Naive thymus-derived CD4-positive, alpha-beta T cell (primary cell): ENCODE measurements at regions of chr13 and their contacts with region 1.

Region 1: GRCh38 chr13:24727731-24728601 is 36.0 kb upstream of the RNF17 start:
- DNase-seq: peak in 8 of 9 donors; percentile 55 to 82 (median 73)
- ATAC-seq: peak; percentile 99
- H3K4me3 ChIP-seq: no peak overlapping the region
- H3K4me3 Mint-ChIP-seq: no peak overlapping the region
- H3K27ac ChIP-seq: no peak overlapping the region
- H3K27ac Mint-ChIP-seq: peak overlapping the region in 1 of 9 donors; percentile 6
- H3K4me1 ChIP-seq: peaks cover 0 to 4% of the 10 kb centered on the region in 2 donors
- H3K4me1 Mint-ChIP-seq: peaks cover 0 to 14% (median 0%) of the 10 kb centered on the region in 7 donors
- H3K27me3 ChIP-seq: no peaks in the 10 kb centered on the region
- H3K27me3 Mint-ChIP-seq: peaks cover 0 to 42% (median 12%) of the 10 kb centered on the region in 5 donors

Region 2: GRCh38 chr13:24574847-24575246 is 153.1 kb before region 1 on chr13:
- CTCF ChIA-PET with region 1: interaction called, 6 read pairs
- POLR2A ChIA-PET with region 1: no interaction called
- intact Hi-C with region 1: loop called in 1 of 2 experiments (anchors 1 kb)
- DNase-seq: no peak
- ATAC-seq: no peak
- H3K4me3 ChIP-seq: no peak overlapping the region
- H3K4me3 Mint-ChIP-seq: no peak overlapping the region
- H3K27ac ChIP-seq: no peak overlapping the region
- H3K27ac Mint-ChIP-seq: no peak overlapping the region
- H3K4me1 ChIP-seq: no peaks in the 10 kb centered on the region
- H3K4me1 Mint-ChIP-seq: peaks cover 0 to 3% (median 0%) of the 10 kb centered on the region in 7 donors
- H3K27me3 ChIP-seq: no peaks in the 10 kb centered on the region
- H3K27me3 Mint-ChIP-seq: peaks cover 7 to 18% (median 12%) of the 10 kb centered on the region in 5 donors

Region 3: GRCh38 chr13:24660029-24660741 is 67.8 kb before region 1 on chr13:
- CTCF ChIA-PET with region 1: no interaction called
- POLR2A ChIA-PET with region 1: no interaction called
- intact Hi-C with region 1: no loop called
- DNase-seq: no peak
- ATAC-seq: no peak
- H3K4me3 ChIP-seq: no peak overlapping the region
- H3K4me3 Mint-ChIP-seq: no peak overlapping the region
- H3K27ac ChIP-seq: no peak overlapping the region
- H3K27ac Mint-ChIP-seq: no peak overlapping the region
- H3K4me1 ChIP-seq: no peaks in the 10 kb centered on the region
- H3K4me1 Mint-ChIP-seq: no peaks in the 10 kb centered on the region
- H3K27me3 ChIP-seq: peaks cover 0 to 4% of the 10 kb centered on the region in 2 donors
- H3K27me3 Mint-ChIP-seq: peaks cover 0 to 28% (median 8%) of the 10 kb centered on the region in 5 donors

Region 4: GRCh38 chr13:24671386-24672107 is 56.4 kb before region 1 on chr13:
- CTCF ChIA-PET with region 1: interaction called, 3 read pairs
- POLR2A ChIA-PET with region 1: no interaction called
- intact Hi-C with region 1: loop called in 1 of 2 experiments (anchors 1 kb)
- DNase-seq: peak in 1 of 9 donors; percentile 22
- ATAC-seq: peak; percentile 64
- H3K4me3 ChIP-seq: no peak overlapping the region
- H3K4me3 Mint-ChIP-seq: peak overlapping the region in 7 of 10 donors; percentile 7 to 58 (median 46)
- H3K27ac ChIP-seq: no peak overlapping the region
- H3K27ac Mint-ChIP-seq: peak overlapping the region in 1 of 9 donors; percentile 59
- H3K4me1 ChIP-seq: no peaks in the 10 kb centered on the region
- H3K4me1 Mint-ChIP-seq: peaks cover 7 to 12% (median 9%) of the 10 kb centered on the region in 7 donors
- H3K27me3 ChIP-seq: no peaks in the 10 kb centered on the region
- H3K27me3 Mint-ChIP-seq: peaks cover 6 to 49% (median 14%) of the 10 kb centered on the region in 5 donors

Region 5: GRCh38 chr13:24693862-24694471 is 34.0 kb before region 1 on chr13:
- CTCF ChIA-PET with region 1: interaction called, 16 read pairs
- POLR2A ChIA-PET with region 1: no interaction called
- intact Hi-C with region 1: loop called (anchors 1 kb)
- DNase-seq: peak in 4 of 9 donors; percentile 21 to 37 (median 28)
- ATAC-seq: peak; percentile 70
- H3K4me3 ChIP-seq: no peak overlapping the region
- H3K4me3 Mint-ChIP-seq: peak overlapping the region in 8 of 10 donors; percentile 3 to 55 (median 38)
- H3K27ac ChIP-seq: no peak overlapping the region
- H3K27ac Mint-ChIP-seq: peak overlapping the region in 1 of 9 donors; percentile 82
- H3K4me1 ChIP-seq: peaks cover 4 to 7% of the 10 kb centered on the region in 2 donors
- H3K4me1 Mint-ChIP-seq: peaks cover 3 to 10% (median 6%) of the 10 kb centered on the region in 7 donors
- H3K27me3 ChIP-seq: peaks cover 0 to 11% of the 10 kb centered on the region in 2 donors
- H3K27me3 Mint-ChIP-seq: peaks cover 34 to 49% (median 44%) of the 10 kb centered on the region in 5 donors

Region 6: DNA sequence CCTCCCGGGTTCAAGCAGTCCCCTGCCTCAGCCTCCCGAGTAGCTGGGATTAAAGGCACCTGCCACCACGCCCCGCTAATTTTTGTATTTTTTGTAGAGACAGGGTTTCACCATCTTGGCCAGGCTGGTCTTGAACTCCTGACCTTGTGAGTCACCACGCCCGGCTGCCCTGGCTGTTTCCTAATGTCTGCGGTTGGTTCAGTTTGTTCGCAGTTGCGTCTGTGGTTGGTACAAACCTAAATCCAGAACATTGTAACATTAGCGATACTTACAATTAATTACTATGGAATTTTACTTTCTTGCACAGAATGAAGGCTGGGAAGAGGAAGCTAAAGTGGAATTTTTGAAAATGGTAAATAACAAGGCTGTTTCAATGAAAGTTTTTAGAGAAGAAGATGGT is 74.1 kb after region 1 on chr13:
- CTCF ChIA-PET with region 1: no interaction called
- POLR2A ChIA-PET with region 1: no interaction called
- intact Hi-C with region 1: no loop called
- DNase-seq: no peak
- ATAC-seq: no peak
- H3K4me3 ChIP-seq: no peak overlapping the region
- H3K4me3 Mint-ChIP-seq: no peak overlapping the region
- H3K27ac ChIP-seq: no peak overlapping the region
- H3K27ac Mint-ChIP-seq: no peak overlapping the region
- H3K4me1 ChIP-seq: no peaks in the 10 kb centered on the region
- H3K4me1 Mint-ChIP-seq: no peaks in the 10 kb centered on the region
- H3K27me3 ChIP-seq: no peaks in the 10 kb centered on the region
- H3K27me3 Mint-ChIP-seq: peaks cover 24 to 39% (median 27%) of the 10 kb centered on the region in 5 donors